ENCODE measurements at regions of chr19 and their contacts with region 1.

Region 1: DNA sequence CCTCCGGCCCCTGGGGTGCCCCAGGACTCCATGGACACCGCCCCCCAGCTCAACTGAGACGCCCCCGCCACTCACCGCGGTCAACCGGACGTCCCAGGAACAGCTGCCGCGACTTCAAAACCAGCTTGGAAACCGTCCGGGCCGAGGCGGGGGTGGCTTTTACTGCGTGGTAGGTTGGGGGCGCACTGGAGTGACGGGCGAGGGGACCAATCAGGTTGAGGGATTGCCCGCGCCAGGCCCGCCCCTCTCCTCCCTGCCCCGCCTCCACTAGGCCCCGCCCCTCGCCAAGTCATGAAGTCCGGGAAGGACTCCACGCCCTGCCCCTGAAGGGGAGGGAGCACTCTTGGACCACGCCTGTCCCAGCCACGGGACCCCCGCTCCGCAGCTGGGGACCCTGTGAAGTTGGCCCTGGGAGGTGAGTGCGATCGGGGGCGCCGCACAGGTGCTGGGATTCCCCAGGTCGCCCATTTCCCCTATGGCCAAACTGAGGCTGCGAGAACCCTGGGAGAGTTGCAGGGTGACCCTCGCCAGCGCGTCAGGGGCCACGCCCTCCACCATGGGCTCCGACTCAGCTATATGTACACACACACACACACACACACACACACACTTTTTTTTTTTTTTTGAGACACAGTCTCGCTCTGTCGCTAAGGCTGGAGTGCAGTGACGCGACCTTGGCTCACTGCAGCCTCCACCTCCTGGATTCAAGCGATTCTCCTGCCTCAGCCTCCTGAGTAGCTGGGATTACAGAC is at the start of gene PLIN3:
- DNase-seq: peak; percentile 95
- H3K4me3 Mint-ChIP-seq: peak within 1 kb of the TSS; percentile 76
- H3K27ac Mint-ChIP-seq: peak within 1 kb of the TSS; percentile 54
- H3K4me1 Mint-ChIP-seq: peaks cover 39% of the 10 kb centered on the region
- H3K27me3 Mint-ChIP-seq: peaks cover 9% of the 10 kb centered on the region
- total RNA-seq, gene PLIN3: 36.3 to 40.5 TPM

Region 2: GRCh38 chr19:4916292-4917082 is 48.8 kb after region 1 on chr19:
- CTCF ChIA-PET with region 1: interaction called, 59 read pairs
- POLR2A ChIA-PET with region 1: interaction called, 19 read pairs
- DNase-seq: peak; percentile 47
- H3K4me3 Mint-ChIP-seq: peak overlapping the region; percentile 93
- H3K27ac Mint-ChIP-seq: peak overlapping the region; percentile 99
- H3K4me1 Mint-ChIP-seq: peaks cover 59% of the 10 kb centered on the region
- H3K27me3 Mint-ChIP-seq: no peaks in the 10 kb centered on the region

Region 3: DNA sequence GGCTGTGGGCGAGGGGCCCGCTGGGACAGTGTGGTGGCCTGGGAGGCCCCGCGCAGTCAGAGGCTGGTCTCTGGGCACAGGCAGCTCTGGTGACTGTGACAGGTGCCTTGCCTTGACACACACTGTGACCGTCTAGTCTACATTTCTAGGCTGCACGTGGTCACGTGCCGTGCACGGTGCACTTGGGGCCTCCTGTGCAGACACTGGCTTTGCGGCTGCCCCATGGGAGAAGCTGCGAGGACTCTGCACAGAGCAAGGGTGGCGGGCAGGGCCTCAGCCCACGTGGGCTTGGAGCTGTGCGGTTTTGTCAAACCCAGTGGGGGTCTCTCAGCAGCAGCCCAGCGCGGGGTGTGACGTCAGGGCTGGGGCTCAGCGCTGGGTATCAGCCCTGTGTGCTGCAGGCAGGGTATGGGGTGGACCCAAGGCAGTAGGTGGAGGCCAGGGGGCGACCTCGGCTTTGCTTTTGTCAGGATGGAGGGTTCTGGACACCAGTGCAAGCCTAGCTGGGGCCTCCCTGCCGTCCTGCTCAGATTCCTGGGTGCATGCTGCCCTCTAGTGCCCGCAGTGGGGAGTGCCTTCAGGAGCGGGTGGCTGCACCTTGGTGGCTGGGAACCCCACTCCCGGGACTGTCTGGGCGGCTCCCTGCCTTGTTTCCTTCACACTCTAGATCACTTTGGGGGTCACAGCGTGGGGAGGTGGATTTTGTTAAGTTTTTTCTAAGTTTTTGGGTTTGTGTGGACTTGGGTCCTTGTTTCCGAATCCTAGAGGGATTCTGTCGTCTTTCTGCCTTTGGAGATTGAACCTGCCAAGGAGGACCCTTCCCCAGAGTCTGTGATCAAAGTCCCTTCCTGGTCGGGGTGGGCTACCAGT is 163.8 kb after region 1 on chr19:
- CTCF ChIA-PET with region 1: interaction called, 30 read pairs
- POLR2A ChIA-PET with region 1: interaction called, 3 read pairs
- DNase-seq: peak; percentile 83
- H3K4me3 Mint-ChIP-seq: no peak overlapping the region
- H3K27ac Mint-ChIP-seq: no peak overlapping the region
- H3K4me1 Mint-ChIP-seq: no peaks in the 10 kb centered on the region
- H3K27me3 Mint-ChIP-seq: no peaks in the 10 kb centered on the region

Measured in activated CD4-positive, alpha-beta memory T cell treated with anti-CD3 and anti-CD28 coated beads, Interleukin-2, amount 10 ng/mL, durations not matched to agents 7 days and 5 days (primary cell).